Common myeloid progenitor, CD34-positive (primary cell): ENCODE measurements at regions of chr17 and their contacts with region 1.

Region 1: DNA sequence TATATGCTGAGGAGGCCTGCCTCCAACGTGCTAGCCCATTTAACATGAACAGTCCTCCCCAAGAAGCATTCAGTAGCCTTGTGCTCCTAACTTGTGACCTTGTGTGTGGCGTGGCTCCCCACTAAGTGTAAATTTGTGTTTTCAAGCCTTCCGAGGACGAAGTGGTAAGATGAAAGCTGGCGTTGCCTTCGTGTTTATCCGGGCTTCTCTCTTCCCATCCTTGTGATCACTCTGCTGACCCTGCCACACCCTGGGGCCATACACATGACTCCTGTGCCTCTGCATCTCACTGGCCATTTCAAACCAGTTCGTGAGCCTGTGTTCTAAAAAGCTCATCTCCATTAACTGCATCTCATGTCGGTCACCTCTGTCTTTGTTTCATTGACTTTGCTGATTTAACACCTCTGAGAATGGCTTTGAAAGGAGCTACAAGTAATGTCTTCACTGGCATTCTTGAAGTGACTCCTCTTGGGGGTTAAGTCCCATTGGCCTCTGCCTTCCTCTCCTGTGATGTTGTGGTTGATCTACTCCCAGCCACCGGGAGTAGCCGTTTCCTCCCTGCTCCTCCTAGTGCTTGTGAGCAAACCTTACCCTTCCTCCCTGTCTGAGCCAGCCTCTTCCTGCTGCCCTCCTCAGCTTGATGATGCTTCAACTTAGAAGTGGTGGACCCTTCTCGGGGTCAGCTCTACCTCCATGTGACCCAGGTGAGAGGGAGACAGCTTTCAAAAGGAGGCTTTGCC is 27.4 kb upstream of the NAGLU start:
- DNase-seq: no peak
- H3K4me3 ChIP-seq: no peak overlapping the region
- H3K27ac ChIP-seq: peak overlapping the region in 1 of 2 experiments; percentile 27
- H3K4me1 ChIP-seq: peaks cover 9 to 30% (median 27%) of the 10 kb centered on the region in 4 experiments
- H3K27me3 ChIP-seq: no peaks in the 10 kb centered on the region

Region 2: GRCh38 chr17:42365136-42365535 is 143.5 kb before region 1 on chr17:
- CTCF ChIA-PET with region 1: no interaction called
- POLR2A ChIA-PET with region 1: no interaction called
- DNase-seq: peak in 1 of 3 donors; percentile 36
- H3K4me3 ChIP-seq: no peak overlapping the region
- H3K27ac ChIP-seq: no peak overlapping the region
- H3K4me1 ChIP-seq: peaks cover 6 to 51% (median 33%) of the 10 kb centered on the region in 4 experiments
- H3K27me3 ChIP-seq: no peaks in the 10 kb centered on the region

Region 3: DNA sequence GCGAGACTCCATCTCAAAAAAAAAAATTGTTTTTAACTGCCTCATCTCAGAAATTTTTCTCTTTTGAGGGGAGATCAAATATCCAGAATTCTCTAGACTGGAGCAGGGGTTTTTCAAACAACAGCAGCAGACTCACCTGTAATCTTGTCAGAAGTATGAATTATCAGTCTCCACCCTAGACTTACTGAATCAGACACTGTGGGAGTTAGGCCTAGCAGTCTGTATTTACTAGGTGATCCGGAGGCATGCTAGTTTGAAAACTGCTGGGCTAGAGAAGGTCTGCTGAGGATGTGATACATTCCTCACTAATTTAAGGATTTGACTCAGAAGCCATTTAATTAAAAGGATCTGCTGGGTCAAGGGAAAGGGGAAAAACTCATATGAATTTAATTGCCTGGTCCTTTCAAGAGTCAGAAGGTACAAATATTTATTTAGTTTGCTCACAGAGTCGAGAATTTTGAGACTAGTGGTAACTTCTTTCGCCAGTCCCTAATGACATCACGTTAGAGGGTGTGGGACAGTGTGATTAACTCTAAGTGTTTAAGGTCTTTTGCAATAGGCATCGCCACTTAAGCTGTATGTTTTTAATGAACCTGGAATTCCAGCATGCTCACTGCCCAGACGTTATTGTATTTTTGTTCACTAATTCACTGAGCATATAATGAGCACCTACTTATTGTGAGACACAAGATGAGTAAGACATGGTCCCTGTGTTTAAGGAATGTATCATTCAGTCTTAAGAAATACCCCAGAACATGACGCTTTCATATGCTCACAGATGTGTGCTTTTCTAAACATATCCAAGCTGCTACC is 35.7 kb before region 1 on chr17:
- CTCF ChIA-PET with region 1: no interaction called
- POLR2A ChIA-PET with region 1: no interaction called
- DNase-seq: no peak
- H3K4me3 ChIP-seq: no peak overlapping the region
- H3K27ac ChIP-seq: no peak overlapping the region
- H3K4me1 ChIP-seq: peaks cover 0 to 8% (median 2%) of the 10 kb centered on the region in 4 experiments
- H3K27me3 ChIP-seq: no peaks in the 10 kb centered on the region

Region 4: DNA sequence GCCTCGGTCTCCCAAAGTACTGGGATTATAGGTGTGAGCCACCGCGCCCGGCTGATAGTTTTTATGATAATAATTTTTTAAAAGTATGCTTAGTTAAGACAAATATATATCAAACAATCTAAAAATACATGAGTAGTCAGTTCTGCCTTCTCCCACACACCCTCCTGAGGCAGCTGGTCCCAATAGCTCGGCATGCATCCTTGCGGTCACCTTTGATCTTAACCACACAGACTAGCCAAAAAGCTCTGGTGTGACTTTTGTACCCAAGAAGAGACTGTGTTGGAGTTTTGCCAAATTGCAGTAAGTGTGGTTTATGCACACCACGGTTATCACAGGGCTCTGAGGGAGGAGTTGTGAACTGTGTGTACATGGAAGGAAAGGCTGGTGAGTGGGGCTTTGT is 24.3 kb before region 1 on chr17:
- CTCF ChIA-PET with region 1: interaction called, 12 read pairs
- POLR2A ChIA-PET with region 1: interaction called, 3 read pairs
- DNase-seq: peak in 2 of 3 donors; percentile 26 to 44
- H3K4me3 ChIP-seq: no peak overlapping the region
- H3K27ac ChIP-seq: no peak overlapping the region
- H3K4me1 ChIP-seq: no peaks in the 10 kb centered on the region
- H3K27me3 ChIP-seq: no peaks in the 10 kb centered on the region

Region 5: DNA sequence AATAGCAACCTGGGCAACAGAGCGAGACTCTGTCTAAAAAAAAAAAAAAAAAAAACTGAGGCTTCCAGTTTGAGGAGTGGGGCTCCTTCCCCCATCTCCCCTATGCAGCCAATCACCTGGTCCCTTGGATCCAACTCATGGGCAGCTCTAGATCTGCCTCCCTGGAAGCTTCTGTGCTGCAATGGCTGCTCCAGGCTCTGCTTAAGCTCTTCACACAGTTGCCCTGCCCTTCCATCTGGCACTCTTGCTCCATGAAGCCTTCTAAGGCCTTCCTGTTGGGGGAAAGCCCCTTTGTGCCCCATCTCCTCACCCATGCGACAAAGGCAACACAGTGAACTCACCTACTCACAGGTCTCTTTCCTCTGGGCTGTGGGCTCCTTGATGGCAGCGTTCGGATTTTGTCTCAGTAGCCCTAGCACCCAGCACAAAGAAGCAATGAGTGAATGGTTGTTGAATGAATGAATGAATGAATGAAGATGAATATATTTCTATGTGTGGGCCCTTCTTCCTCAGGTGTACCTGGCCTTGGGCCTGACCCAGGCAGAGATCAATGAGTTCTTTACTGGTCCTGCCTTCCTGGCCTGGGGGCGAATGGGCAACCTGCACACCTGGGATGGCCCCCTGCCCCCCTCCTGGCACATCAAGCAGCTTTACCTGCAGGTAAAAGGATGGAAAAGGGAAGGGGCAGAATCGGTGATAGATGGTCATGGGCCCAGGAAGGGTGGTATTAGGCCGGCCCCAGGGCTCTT is 29.4 kb after region 1 on chr17:
- CTCF ChIA-PET with region 1: no interaction called
- POLR2A ChIA-PET with region 1: no interaction called
- DNase-seq: no peak
- H3K4me3 ChIP-seq: no peak overlapping the region
- H3K27ac ChIP-seq: no peak overlapping the region
- H3K4me1 ChIP-seq: peaks cover 0 to 27% (median 20%) of the 10 kb centered on the region in 4 experiments
- H3K27me3 ChIP-seq: no peaks in the 10 kb centered on the region